ENCODE measurements at regions of chrX and their contacts with region 1.

Region 1: DNA sequence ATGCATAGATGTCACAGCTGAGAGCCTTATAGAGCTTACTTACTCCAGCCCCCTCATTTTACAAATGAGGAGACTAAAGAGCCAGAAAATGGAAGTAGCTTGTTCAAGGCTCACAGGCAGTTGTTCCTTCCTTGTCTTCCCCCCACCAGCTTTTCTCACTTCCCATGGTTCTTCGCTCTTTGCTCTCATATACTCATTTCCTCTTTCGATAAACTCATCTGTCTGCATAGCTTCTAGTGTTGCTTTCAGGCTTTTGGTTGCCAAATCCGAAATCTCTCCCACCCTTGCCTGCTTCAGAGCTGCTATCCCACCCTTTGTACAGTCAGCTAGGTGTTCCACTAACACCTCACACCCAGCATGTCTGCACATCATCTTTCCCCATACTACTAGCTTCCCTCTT is 25.0 kb upstream of the GJB1 start:
- DNase-seq: peak; percentile 45
- H3K4me3 Mint-ChIP-seq: peak overlapping the region; percentile 91
- H3K27ac Mint-ChIP-seq: peak overlapping the region; percentile 93
- H3K4me1 Mint-ChIP-seq: peaks cover 7% of the 10 kb centered on the region
- H3K27me3 Mint-ChIP-seq: no peaks in the 10 kb centered on the region

Region 2: DNA sequence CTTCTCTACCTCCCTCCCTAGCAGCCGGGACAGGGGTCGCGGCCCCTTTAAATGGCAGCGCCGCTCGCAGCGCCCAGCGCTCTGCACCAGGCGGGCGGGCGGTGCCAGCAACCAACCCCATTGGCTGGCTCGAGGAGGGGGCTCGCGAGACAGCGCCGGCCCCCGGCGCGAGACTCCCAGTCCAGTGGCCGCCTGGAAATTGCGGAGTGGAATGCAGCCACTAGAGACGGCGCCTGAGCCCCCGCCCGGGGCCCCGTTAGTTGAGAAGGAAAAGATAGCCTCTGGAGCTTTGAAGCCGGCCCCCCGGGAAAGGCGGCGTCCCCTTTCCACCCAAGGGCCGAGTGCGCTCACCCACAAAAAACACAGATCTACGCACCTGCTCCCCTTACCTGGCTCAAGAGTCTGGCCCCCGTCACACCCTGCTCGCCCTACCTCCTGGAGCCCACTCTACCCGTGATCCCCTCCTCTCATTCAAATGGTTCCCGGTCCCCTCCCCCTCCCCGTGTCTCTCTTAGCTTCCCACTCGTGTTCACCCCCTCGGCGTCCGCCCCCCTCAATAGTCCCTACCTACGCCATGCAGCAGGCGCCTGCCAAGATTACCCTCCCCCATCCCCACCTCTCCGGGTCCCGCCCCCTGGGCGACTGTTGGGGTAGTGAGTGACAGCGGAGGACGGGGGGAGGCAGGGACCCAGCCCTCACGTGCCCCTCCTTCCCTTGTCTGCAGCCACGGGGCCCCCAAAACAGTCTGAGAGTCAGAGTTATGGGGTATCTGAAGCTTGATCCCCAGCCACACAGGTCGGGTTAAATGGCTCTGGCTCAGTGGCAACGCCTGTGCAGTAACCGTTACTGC is 56.3 kb after region 1 on chrX and contains the start of gene ZMYM3:
- CTCF ChIA-PET with region 1: no interaction called
- intact Hi-C with region 1: loop called (anchors 1 kb)
- DNase-seq: peak; percentile 70
- H3K4me3 Mint-ChIP-seq: peak within 1 kb of the TSS; percentile 87
- H3K27ac Mint-ChIP-seq: peak within 1 kb of the TSS; percentile 76
- H3K4me1 Mint-ChIP-seq: peaks cover 29% of the 10 kb centered on the region
- H3K27me3 Mint-ChIP-seq: no peaks in the 10 kb centered on the region
- total RNA-seq, gene ZMYM3: 7.7 to 8.2 TPM

Measured in activated naive CD4-positive, alpha-beta T cell treated with anti-CD3 and anti-CD28 coated beads for 36 hours (primary cell).